ENCODE measurements at regions of chr1 and their contacts with region 1.

Region 1: DNA sequence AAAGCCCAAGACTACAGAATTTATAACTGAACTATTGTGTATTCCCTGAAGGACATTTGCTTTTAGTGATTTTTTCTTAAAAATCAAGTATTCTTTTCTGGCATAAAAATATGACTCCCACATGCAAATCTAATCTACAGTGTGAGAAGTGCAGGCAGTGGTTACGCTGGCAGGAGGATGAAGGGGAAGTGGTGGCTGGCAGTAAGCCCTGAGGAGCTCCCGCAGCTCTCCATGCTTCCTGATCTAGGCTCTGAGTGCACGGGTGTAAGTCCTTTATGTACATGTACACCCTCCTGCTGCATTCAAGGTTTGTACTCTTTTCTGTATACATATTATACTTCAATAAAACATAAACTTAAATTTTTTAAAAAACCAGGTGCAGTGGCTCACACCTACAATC is 67.5 kb upstream of the PRDX6 start:
- DNase-seq: peak in 6 of 7 donors; percentile 33 to 68 (median 52)
- H3K4me3 ChIP-seq: no peak overlapping the region
- H3K27ac ChIP-seq: no peak overlapping the region
- H3K4me1 ChIP-seq: peaks cover 7 to 25% of the 10 kb centered on the region in 2 donors
- H3K27me3 ChIP-seq: no peaks in the 10 kb centered on the region
- CTCF ChIP-seq: no peak
- POLR2A ChIP-seq: no peak

Region 2: GRCh38 chr1:173202430-173203145 is 207.0 kb before region 1 on chr1:
- intact Hi-C with region 1: no loop called
- DNase-seq: peak in 5 of 7 donors; percentile 31 to 52 (median 41)
- H3K4me3 ChIP-seq: no peak overlapping the region
- H3K27ac ChIP-seq: no peak overlapping the region
- H3K4me1 ChIP-seq: peaks cover 9 to 25% of the 10 kb centered on the region in 2 donors
- H3K27me3 ChIP-seq: no peaks in the 10 kb centered on the region
- CTCF ChIP-seq: peak; percentile 44 to 83 (median 72)
- POLR2A ChIP-seq: no peak

Region 3: GRCh38 chr1:173255214-173255813 is 154.3 kb before region 1 on chr1:
- intact Hi-C with region 1: loop called in 1 of 2 experiments (anchors 10 kb)
- DNase-seq: peak in 3 of 7 donors; percentile 15 to 48 (median 28)
- H3K4me3 ChIP-seq: no peak overlapping the region
- H3K27ac ChIP-seq: no peak overlapping the region
- H3K4me1 ChIP-seq: no peaks in the 10 kb centered on the region
- H3K27me3 ChIP-seq: no peaks in the 10 kb centered on the region
- CTCF ChIP-seq: peak; percentile 56 to 83 (median 68)
- POLR2A ChIP-seq: no peak

Region 4: GRCh38 chr1:173330149-173330951 is 79.3 kb before region 1 on chr1:
- intact Hi-C with region 1: loop called in 1 of 2 experiments (anchors 10 kb)
- DNase-seq: peak in 2 of 7 donors; percentile 14 to 30
- H3K4me3 ChIP-seq: no peak overlapping the region
- H3K27ac ChIP-seq: peak overlapping the region; percentile 55 to 81 (median 61)
- H3K4me1 ChIP-seq: peaks cover 18% of the 10 kb centered on the region in 2 donors
- H3K27me3 ChIP-seq: no peaks in the 10 kb centered on the region
- CTCF ChIP-seq: no peak
- POLR2A ChIP-seq: no peak